Motor neuron (in vitro differentiated cells): ENCODE measurements at regions of chr20 and their contacts with region 1.

Region 1: GRCh38 chr20:47785854-47786764 is 828 bp upstream of the SULF2 start:
- ATAC-seq: peak; percentile 48 to 79 (median 74)
- H3K4me3 ChIP-seq: peak overlapping the region; percentile 45 to 84 (median 56)
- H3K27ac ChIP-seq: peak overlapping the region; percentile 90
- H3K4me1 ChIP-seq: peaks cover 39 to 48% of the 10 kb centered on the region in 2 donors

Region 2: DNA sequence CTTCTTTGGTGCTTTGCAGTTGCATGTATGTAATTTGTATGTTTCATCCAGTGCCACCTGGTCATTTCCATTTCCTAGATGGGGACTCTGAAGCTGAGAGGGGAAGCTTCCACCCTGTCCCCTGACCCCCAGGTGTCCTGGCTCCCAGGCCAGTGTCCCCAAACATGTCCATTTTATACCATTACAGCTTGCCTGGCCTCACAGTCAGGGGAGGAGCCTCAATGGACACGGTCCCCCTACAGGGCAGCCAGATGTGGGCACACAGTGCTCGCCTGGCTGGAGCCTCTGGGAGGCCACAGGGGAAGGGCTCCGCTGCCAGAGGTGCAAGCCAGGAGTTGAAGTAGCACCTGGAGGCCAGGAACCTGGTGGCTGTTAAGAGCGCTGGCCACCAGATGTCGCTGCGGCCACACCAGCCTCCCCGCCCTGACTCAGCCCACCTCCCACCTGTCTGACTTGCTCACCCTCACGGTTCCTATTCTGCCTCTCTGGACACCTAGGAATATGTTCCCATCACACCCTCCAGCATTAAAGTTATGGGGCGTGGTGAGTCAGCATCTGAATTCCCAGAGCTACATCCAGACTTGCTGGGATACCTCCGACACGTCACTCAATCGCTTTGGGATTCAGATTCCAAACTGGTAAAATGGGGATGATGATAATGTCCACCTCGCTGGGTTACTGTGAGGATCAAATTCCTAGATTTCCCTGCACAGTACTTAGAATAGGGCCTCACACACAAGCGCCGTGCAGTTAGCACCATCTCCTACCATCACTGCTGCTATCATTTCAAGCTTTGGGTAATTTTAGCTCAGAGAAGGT is 108.3 kb before region 1 on chr20:
- in situ Hi-C with region 1: no loop called
- ATAC-seq: peak in 7 of 8 experiments; percentile 4 to 83 (median 74)
- H3K4me3 ChIP-seq: no peak overlapping the region
- H3K27ac ChIP-seq: no peak overlapping the region
- H3K4me1 ChIP-seq: peaks cover 0 to 2% of the 10 kb centered on the region in 2 donors

Region 3: DNA sequence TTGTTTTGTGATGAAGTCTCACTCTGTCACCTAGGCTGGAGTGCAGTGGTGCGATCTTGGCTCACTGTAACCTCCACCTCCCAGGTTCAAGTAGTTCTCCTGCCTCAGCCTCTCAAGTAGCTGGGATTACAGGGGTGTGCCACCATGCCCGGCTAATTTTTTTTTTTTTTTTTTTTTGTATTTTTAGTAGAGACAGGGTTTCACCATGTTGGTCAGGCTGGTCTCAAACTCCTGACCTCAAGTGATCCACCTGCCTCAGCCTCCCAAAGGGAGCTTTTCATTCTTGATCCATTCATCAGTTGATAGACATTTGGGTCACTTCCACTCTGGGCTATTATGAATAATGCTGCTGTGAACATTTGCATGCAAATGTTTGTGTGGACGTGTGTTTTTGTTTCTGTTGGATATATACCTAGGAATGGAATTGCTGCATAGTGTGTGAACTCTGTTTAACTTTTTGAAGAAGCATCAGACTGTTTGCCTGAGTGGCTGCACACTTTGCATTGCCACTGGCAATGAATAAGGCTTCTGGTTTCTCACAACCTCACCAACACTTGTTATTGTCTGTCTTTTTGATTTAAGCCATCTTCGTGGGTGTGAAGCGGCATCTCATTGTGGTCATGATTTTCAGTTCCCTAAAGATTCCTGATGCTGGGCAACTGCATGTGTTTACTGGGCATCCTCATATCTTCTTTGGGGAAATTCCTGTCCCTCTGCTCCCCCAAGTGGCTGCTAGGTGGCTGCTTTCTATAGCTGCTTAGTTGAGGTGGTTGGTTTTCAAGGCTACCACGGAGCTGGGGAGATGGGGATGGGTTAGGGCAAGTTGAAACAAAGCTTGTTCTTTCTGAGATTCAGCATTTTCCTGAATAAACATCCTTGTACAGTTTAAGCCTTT is 402.8 kb after region 1 on chr20:
- in situ Hi-C with region 1: loop called in 1 of 9 experiments (anchors 25 kb)
- ATAC-seq: peak in 2 of 8 experiments; percentile 40 to 42
- H3K4me3 ChIP-seq: no peak overlapping the region
- H3K27ac ChIP-seq: no peak overlapping the region
- H3K4me1 ChIP-seq: peaks cover 27 to 34% of the 10 kb centered on the region in 2 donors

Region 4: DNA sequence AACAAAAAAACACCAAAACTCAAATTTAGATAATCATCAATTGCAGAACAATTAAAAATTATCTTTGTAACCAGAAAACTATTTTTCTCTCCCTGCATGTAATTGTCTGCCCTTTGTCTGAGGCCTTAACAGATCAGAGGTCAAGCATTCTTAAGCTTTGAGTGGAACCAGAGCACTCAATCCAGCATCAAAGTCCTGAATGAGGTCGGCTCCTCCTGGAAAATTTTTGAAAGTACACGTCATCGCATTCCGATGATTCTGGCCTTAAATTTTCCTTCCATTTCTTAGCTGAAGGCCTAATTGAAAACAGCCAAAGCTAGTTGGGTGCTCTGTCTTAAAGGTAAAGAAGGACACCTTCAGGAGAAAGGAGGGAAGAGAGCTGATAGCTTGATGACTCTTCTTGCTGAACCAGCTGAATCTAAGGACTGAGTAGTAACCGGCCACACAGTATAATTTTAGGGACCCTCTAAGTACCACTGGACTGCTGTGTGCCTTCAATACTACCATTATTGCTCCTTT is 509.4 kb after region 1 on chr20:
- in situ Hi-C with region 1: loop called in 2 of 9 experiments (anchors 25 kb)
- ATAC-seq: peak; percentile 48 to 70 (median 62)
- H3K4me3 ChIP-seq: no peak overlapping the region
- H3K27ac ChIP-seq: no peak overlapping the region
- H3K4me1 ChIP-seq: peaks cover 39 to 45% of the 10 kb centered on the region in 2 donors